ENCODE measurements at regions of chr12 and their contacts with region 1.

Region 1: GRCh38 chr12:96399919-96400797 is at the start of gene CDK17:
- DNase-seq: peak; percentile 84 to 87 (median 86)
- ATAC-seq: peak; percentile 79 to 89 (median 84)
- H3K4me3 ChIP-seq: peak within 1 kb of the TSS; percentile 81 to 86 (median 83)
- H3K27ac ChIP-seq: peak within 1 kb of the TSS; percentile 95 to 98 (median 98)
- H3K4me1 ChIP-seq: peaks cover 0 to 33% (median 7%) of the 10 kb centered on the region in 4 donors
- H3K27me3 ChIP-seq: no peaks in the 10 kb centered on the region
- CTCF ChIP-seq: peak; percentile 27 to 78 (median 37)
- POLR2A ChIP-seq: peak; percentile 81
- total RNA-seq, gene CDK17: 8.9 to 16.1 (median 13.7) TPM

Region 2: GRCh38 chr12:96237465-96238077 is 162.6 kb before region 1 on chr12:
- intact Hi-C with region 1: loop called in 1 of 2 experiments (anchors 10 kb)
- DNase-seq: no peak
- ATAC-seq: peak in 2 of 4 donors; percentile 10 to 21
- H3K4me3 ChIP-seq: no peak overlapping the region
- H3K27ac ChIP-seq: no peak overlapping the region
- H3K4me1 ChIP-seq: peaks cover 0 to 21% (median 0%) of the 10 kb centered on the region in 4 donors
- H3K27me3 ChIP-seq: no peaks in the 10 kb centered on the region
- CTCF ChIP-seq: no peak
- POLR2A ChIP-seq: no peak

Region 3: GRCh38 chr12:96359328-96359727 is 40.8 kb before region 1 on chr12:
- intact Hi-C with region 1: no loop called
- DNase-seq: no peak
- ATAC-seq: no peak
- H3K4me3 ChIP-seq: no peak overlapping the region
- H3K27ac ChIP-seq: no peak overlapping the region
- H3K4me1 ChIP-seq: peaks cover 0 to 11% (median 0%) of the 10 kb centered on the region in 4 donors
- H3K27me3 ChIP-seq: no peaks in the 10 kb centered on the region
- CTCF ChIP-seq: no peak
- POLR2A ChIP-seq: no peak

Measured in right lobe of liver (tissue), 6 donors.